Activated CD4-positive, alpha-beta memory T cell treated with anti-CD3 and anti-CD28 coated beads, Interleukin-2, amount 10 ng/mL, durations not matched to agents 7 days and 5 days (primary cell): ENCODE measurements at regions of chr14 and their contacts with region 1.

Region 1: GRCh38 chr14:73463411-73463810 is 5.1 kb upstream of the NUMB start:
- DNase-seq: peak; percentile 54
- H3K4me3 Mint-ChIP-seq: peak overlapping the region; percentile 22
- H3K27ac Mint-ChIP-seq: peak overlapping the region; percentile 81
- H3K4me1 Mint-ChIP-seq: peaks cover 60% of the 10 kb centered on the region
- H3K27me3 Mint-ChIP-seq: no peaks in the 10 kb centered on the region

Region 2: DNA sequence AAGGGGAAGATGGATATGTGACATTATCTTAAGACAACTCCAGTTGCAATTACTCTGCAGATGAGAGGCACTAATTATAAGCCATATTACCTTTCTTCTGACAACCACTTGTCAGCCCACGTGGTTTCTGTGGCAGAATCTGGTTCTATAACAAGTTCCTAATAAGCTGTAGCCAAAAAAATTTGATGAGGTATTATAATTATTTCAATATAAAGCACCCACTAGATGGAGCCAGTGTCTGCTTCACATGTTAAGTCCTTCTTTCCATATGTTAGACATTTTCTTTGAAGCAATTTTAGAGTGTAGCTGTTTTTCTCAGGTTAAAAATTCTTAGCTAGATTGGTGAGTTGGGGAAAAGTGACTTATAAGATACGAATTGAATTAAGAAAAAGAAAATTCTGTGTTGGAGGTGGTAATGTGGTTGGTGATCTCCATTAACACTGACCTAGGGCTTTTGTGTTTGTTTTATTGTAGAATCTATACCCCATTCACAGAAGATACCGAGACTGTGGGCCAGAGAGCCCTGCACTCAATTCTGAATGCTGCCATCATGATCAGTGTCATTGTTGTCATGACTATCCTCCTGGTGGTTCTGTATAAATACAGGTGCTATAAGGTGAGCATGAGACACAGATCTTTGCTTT is 290.2 kb before region 1 on chr14:
- CTCF ChIA-PET with region 1: interaction called, 12 read pairs
- POLR2A ChIA-PET with region 1: no interaction called
- DNase-seq: no peak
- H3K4me3 Mint-ChIP-seq: no peak overlapping the region
- H3K27ac Mint-ChIP-seq: no peak overlapping the region
- H3K4me1 Mint-ChIP-seq: no peaks in the 10 kb centered on the region
- H3K27me3 Mint-ChIP-seq: no peaks in the 10 kb centered on the region